Breast epithelium (tissue), 4 donors: ENCODE measurements at regions of chr11 and their contacts with region 1.

Region 1: DNA sequence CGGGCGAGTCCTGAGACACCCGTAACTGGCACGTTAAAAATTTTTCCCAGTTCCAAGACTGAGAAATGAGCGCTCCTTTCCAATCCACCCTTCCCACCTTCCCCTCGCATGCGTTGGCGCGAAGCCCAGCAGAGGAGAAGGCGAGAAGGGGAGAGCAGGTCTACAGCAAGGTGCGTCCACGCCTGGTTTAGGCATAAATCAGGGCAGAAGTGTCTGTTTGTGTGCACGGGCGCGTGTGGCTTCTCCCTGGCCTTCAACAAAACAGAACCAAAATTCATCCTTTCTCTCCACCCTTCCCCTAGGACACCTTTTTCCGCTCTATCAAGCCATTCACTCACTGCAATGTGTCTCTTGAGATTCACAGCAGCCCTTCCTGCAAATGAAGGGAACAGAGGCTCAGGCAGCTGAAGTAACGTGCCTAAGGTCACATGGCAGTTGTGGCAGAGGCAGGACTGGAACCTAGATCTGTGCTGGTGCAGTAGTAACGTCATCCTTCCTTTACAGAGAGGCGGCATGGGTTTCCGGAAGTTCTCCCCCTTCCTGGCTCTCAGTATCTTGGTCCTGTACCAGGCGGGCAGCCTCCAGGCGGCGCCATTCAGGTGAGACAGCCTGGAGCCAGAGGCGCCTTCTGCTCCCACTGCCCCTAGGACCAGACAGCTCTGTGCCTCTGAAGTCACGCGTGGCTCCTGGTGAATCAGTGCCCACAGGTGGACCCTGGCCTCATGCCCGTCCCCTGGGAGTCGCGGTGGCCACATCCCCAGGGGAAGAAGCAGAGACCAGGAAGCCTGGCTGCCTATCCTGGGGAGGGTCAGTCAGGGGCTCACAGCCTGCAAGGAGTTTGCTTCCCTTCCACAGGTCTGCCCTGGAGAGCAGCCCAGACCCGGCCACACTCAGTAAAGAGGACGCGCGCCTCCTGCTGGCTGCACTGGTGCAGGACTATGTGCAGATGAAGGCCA is 1.1 kb downstream of the CALCB start:
- DNase-seq: peak; percentile 52 to 77
- H3K4me3 ChIP-seq: peak overlapping the region in 2 of 3 donors; percentile 35 to 56
- H3K27ac ChIP-seq: no peak overlapping the region
- H3K4me1 ChIP-seq: peaks cover 0 to 9% of the 10 kb centered on the region in 2 donors
- H3K27me3 ChIP-seq: peaks cover 0 to 47% of the 10 kb centered on the region in 2 donors
- CTCF ChIP-seq: peak in 2 of 3 donors; percentile 41 to 53
- POLR2A ChIP-seq: no peak

Region 2: DNA sequence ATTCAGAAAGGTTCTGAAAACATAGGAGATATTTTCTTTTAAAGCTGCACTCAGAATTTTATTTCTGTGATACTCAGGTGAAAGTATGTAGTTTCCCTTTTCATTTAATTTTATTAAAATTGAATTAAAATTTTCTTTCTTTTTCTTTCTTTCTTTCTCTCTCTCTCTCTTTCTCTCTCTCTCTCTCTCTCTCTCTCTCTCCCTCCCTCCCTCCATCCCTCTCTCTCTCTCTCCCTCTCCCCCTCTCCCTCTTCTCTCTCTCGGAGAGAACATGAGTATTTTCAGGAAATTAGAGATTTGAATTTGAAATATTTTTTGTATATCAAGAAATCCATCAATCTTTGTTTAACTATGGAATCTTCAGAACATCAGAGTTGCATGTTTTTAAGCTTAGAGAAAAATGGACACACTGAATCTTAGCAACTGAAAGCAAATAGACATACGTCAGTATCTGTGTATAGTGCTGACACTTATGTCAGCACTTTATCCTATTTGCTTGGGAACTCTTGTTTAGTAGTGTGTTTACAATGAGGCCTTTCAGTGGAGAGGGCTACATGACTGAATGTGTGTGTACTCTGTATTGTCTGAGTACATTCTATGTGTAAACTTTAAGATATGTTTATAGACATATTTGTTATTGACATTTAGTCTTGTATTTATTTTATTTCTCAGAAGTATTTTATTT is 386.4 kb before region 1 on chr11:
- intact Hi-C with region 1: loop called (anchors 5 kb)
- DNase-seq: no peak
- H3K4me3 ChIP-seq: no peak overlapping the region
- H3K27ac ChIP-seq: no peak overlapping the region
- H3K4me1 ChIP-seq: no peaks in the 10 kb centered on the region
- H3K27me3 ChIP-seq: no peaks in the 10 kb centered on the region
- CTCF ChIP-seq: no peak
- POLR2A ChIP-seq: no peak

Region 3: DNA sequence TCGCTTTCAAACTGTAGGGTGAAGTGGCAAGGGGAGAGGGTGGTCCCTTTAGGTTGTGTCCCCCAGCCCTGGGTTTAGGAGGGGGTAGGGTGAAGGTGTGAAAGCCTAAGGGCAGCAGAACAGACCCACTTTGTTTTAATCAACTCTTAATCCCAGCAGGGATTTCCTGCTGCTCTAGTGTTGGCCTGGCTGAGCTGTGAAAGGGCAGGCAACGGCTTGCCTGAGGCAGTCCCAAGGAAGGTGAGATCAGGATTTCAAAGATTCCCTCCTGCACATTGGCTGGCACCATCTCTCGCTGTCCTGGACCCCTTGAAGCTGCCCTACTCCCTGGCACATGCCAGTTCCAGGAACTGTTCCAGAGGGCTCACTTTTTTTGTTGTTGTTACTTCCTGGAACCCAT is 261.5 kb after region 1 on chr11:
- intact Hi-C with region 1: no loop called
- DNase-seq: no peak
- H3K4me3 ChIP-seq: no peak overlapping the region
- H3K27ac ChIP-seq: no peak overlapping the region
- H3K4me1 ChIP-seq: no peaks in the 10 kb centered on the region
- H3K27me3 ChIP-seq: no peaks in the 10 kb centered on the region
- CTCF ChIP-seq: no peak
- POLR2A ChIP-seq: no peak